ENCODE measurements at regions of chr18 and their contacts with region 1.

Region 1: GRCh38 chr18:6219116-6219717 is 195.5 kb downstream of the L3MBTL4 start:
- DNase-seq: peak; percentile 43
- H3K4me3 ChIP-seq: no peak overlapping the region
- H3K27ac ChIP-seq: no peak overlapping the region
- H3K27me3 ChIP-seq: no peaks in the 10 kb centered on the region
- CTCF ChIP-seq: peak; percentile 98

Region 2: GRCh38 chr18:5868218-5869115 is 350.8 kb before region 1 on chr18:
- CTCF ChIA-PET with region 1: interaction called, 156 read pairs
- POLR2A ChIA-PET with region 1: no interaction called
- DNase-seq: peak; percentile 75
- H3K4me3 ChIP-seq: no peak overlapping the region
- H3K27ac ChIP-seq: no peak overlapping the region
- H3K27me3 ChIP-seq: peaks cover 6% of the 10 kb centered on the region
- CTCF ChIP-seq: peak; percentile 87

Region 3: GRCh38 chr18:5879479-5879882 is 339.7 kb before region 1 on chr18:
- CTCF ChIA-PET with region 1: interaction called, 156 read pairs
- POLR2A ChIA-PET with region 1: no interaction called
- DNase-seq: peak; percentile 11
- H3K4me3 ChIP-seq: no peak overlapping the region
- H3K27ac ChIP-seq: no peak overlapping the region
- H3K27me3 ChIP-seq: no peaks in the 10 kb centered on the region
- CTCF ChIP-seq: peak; percentile 84

Region 4: GRCh38 chr18:6096730-6097129 is 122.5 kb before region 1 on chr18:
- CTCF ChIA-PET with region 1: no interaction called
- POLR2A ChIA-PET with region 1: no interaction called
- DNase-seq: no peak
- H3K4me3 ChIP-seq: no peak overlapping the region
- H3K27ac ChIP-seq: no peak overlapping the region
- H3K27me3 ChIP-seq: no peaks in the 10 kb centered on the region
- CTCF ChIP-seq: no peak

Region 5: DNA sequence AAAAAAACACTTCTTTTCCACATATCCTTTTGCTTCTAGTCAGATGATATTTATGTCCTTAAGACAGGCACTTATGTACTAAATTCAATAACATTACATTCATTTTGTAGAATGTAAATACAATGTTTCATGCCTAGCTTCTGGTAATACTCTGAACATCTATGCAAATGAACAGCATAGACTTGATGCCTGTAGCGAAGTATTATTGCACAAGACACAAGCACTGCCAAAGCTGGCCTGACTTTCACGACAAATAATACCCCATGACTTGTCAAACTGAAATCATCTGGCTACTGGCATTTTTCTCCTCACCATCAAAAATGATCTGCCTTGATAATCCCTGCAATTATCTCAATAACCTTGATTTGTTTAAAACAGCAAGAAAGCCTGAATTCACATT is 94.2 kb after region 1 on chr18:
- CTCF ChIA-PET with region 1: no interaction called
- POLR2A ChIA-PET with region 1: no interaction called
- DNase-seq: no peak
- H3K4me3 ChIP-seq: no peak overlapping the region
- H3K27ac ChIP-seq: no peak overlapping the region
- H3K27me3 ChIP-seq: no peaks in the 10 kb centered on the region
- CTCF ChIP-seq: no peak